Endothelial cell of umbilical vein (primary cell): ENCODE measurements at regions of chr12 and their contacts with region 1.

Region 1: DNA sequence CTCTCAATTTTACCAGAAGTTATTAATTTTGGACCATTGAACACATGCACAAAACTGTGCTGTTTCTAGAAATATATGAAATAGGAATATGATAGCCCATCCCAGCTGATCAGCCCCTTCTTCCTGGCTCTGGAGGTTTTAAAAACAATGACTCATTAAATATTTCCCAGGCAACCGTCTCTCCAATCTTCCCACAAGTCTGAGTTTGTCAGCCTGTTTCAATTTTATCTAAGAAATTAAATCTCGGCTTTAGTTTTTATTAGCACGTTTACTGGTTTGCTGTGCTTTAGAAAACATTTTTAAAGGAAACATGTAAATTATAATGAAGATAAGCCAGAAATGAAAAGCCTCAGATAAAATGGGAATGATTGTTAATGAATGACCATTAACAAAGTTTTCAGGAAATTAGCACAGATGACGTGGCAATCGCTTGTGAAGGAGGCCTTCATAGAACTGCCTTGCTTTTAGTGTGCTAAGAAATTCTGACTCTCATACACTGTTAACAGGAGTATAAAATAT is 89.3 kb upstream of the RAP1B start:
- DNase-seq: peak; percentile 92
- H3K4me3 ChIP-seq: peak overlapping the region in 2 of 3 experiments; percentile 9 to 51
- H3K27ac ChIP-seq: peak overlapping the region; percentile 95
- H3K4me1 ChIP-seq: peaks cover 17% of the 10 kb centered on the region
- H3K27me3 ChIP-seq: no peaks in the 10 kb centered on the region
- CTCF ChIP-seq: no peak
- POLR2A ChIP-seq: no peak

Region 2: DNA sequence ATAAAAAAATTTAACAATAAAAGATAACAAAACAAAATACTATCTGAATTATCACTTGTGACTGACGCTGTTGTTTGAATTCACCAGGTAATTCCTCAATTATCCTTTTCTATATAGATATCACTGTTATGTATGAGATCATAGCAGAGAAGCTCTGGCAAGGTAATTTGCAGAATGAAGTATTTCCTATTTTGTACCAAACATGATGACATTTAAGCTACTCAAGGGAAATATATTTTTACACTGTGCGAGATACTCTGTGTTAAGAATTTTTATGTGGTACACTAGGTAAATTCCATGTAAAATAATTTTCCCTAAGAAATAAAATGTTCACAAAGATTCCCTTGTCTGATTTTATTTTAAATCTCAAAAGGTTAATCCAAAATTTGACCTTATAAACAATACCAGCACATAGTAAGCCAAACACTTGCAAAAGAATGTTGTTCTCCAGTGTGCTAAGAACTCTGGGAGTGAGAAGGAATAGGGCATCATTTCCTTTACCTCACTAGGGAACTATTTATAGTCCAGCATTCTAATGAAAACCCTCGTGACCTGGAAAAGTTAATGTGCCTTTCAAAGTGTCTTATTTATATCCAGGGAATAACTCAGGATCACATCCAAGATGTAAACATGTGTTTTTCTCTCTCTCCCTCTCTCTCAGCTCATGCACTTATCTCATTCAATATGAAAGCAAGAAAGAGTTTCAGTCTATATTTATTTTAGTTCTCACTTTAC is 25.9 kb before region 1 on chr12:
- CTCF ChIA-PET with region 1: no interaction called
- POLR2A ChIA-PET with region 1: no interaction called
- dilution Hi-C with region 1: no loop called
- intact Hi-C with region 1: loop called (anchors 1 kb)
- DNase-seq: peak; percentile 73
- H3K4me3 ChIP-seq: no peak overlapping the region
- H3K27ac ChIP-seq: no peak overlapping the region
- H3K4me1 ChIP-seq: peaks cover 7% of the 10 kb centered on the region
- H3K27me3 ChIP-seq: peaks cover 0 to 13% of the 10 kb centered on the region in 2 experiments
- CTCF ChIP-seq: no peak
- POLR2A ChIP-seq: no peak

Region 3: GRCh38 chr12:68538726-68539614 is 17.6 kb after region 1 on chr12:
- CTCF ChIA-PET with region 1: no interaction called
- POLR2A ChIA-PET with region 1: no interaction called
- dilution Hi-C with region 1: no loop called
- intact Hi-C with region 1: loop called (anchors 2 kb)
- DNase-seq: peak; percentile 66
- H3K4me3 ChIP-seq: no peak overlapping the region
- H3K27ac ChIP-seq: no peak overlapping the region
- H3K4me1 ChIP-seq: peaks cover 16% of the 10 kb centered on the region
- H3K27me3 ChIP-seq: no peaks in the 10 kb centered on the region
- CTCF ChIP-seq: no peak
- POLR2A ChIP-seq: no peak